H1 (cell line): ENCODE measurements at regions of chr1 and their contacts with region 1.

Region 1: GRCh38 chr1:117093870-117094621 is 27.5 kb downstream of the TRIM45 start:
- DNase-seq: no peak
- H3K4me3 ChIP-seq: no peak overlapping the region
- H3K27ac ChIP-seq: no peak overlapping the region
- H3K4me1 ChIP-seq: peaks cover 0 to 9% (median 2%) of the 10 kb centered on the region in 4 experiments; a peak in 2 of 7 replicates
- H3K27me3 ChIP-seq: no peaks in the 10 kb centered on the region
- CTCF ChIP-seq: peak in 2 of 3 experiments; percentile 10 to 40; a peak in 2 of 4 replicates
- EP300 ChIP-seq: no peak
- POLR2A ChIP-seq: no peak
- RAD21 ChIP-seq: peak; percentile 24 to 35; a peak in 2 of 4 replicates

Region 2: GRCh38 chr1:116990612-116991151 is 103.4 kb before region 1 on chr1:
- CTCF ChIA-PET with region 1: no interaction called
- POLR2A ChIA-PET with region 1: no interaction called
- DNase-seq: no peak
- H3K4me3 ChIP-seq: no peak overlapping the region
- H3K27ac ChIP-seq: no peak overlapping the region
- H3K4me1 ChIP-seq: peaks cover 0 to 4% (median 0%) of the 10 kb centered on the region in 4 experiments; a peak in 1 of 7 replicates
- H3K27me3 ChIP-seq: no peaks in the 10 kb centered on the region
- CTCF ChIP-seq: no peak
- EP300 ChIP-seq: no peak
- POLR2A ChIP-seq: no peak
- RAD21 ChIP-seq: no peak

Region 3: DNA sequence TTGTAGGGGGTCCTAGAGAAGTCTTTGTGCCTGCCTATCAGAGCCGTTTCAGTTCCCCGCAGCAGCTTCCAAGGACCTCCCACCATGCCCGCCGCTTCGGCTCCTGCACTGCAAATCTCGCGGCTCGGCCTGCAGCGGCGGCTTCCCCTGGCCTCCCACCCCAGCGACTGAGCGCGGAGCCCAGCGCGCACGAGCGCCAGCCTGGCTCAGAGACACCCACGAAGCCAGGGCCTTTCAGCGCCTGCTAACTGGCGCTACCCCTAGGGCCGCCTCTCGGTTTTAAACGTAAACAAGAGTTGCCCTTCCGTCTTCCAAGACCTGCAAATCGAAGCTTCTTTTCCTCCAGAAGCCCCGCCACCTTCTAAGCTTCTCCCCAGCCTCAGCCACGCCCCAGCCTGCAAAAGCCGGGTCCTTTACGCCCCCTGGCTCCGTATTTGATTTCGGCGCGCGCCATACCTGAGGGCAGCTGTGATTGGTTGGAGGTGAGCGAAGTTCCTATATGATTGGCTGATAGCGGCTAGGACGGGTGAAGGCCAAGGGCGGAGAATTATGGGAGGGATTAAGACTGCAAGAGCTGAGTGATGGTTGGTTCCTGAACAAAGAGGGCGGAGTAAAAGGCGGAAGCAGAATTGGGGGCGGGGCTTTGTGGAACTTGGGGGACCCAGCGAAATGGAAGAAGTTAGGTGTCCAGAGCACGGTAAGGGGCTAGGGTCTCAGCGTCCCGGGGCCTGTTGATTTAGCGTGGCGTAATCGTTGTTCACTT is 34.2 kb before region 1 on chr1 and contains the start of gene TTF2:
- CTCF ChIA-PET with region 1: interaction called, 5 read pairs
- POLR2A ChIA-PET with region 1: interaction called, 10 read pairs
- DNase-seq: peak; percentile 93 to 98
- H3K4me3 ChIP-seq: peak within 1 kb of the TSS; percentile 77 to 96 (median 90)
- H3K27ac ChIP-seq: peak within 1 kb of the TSS; percentile 92
- H3K4me1 ChIP-seq: peaks cover 0 to 3% (median 1%) of the 10 kb centered on the region in 4 experiments; a peak in 1 of 7 replicates
- H3K27me3 ChIP-seq: no peaks in the 10 kb centered on the region
- CTCF ChIP-seq: peak in 1 of 3 experiments; percentile 30; a peak in 2 of 4 replicates
- EP300 ChIP-seq: no peak
- POLR2A ChIP-seq: peak; percentile 80 to 89
- RAD21 ChIP-seq: 0 out of 4 replicates have a peak, but pooled peaks of 1 of the 2 experiments have one; percentile 14
- total RNA-seq, gene TTF2: 89.6 and 93.2 TPM in 2 replicates

Region 4: GRCh38 chr1:117067533-117068370 is 26.3 kb before region 1 on chr1:
- CTCF ChIA-PET with region 1: interaction called, 49 read pairs
- POLR2A ChIA-PET with region 1: interaction called, 3 read pairs
- DNase-seq: no peak
- H3K4me3 ChIP-seq: no peak overlapping the region
- H3K27ac ChIP-seq: no peak overlapping the region
- H3K4me1 ChIP-seq: no peaks in the 10 kb centered on the region; a peak in 1 of 7 replicates
- H3K27me3 ChIP-seq: peaks cover 0 to 1% (median 0%) of the 10 kb centered on the region in 4 experiments; a peak in 1 of 7 replicates
- CTCF ChIP-seq: peak; percentile 57 to 80 (median 67)
- EP300 ChIP-seq: no peak
- POLR2A ChIP-seq: no peak
- RAD21 ChIP-seq: peak; percentile 86 to 88

Region 5: GRCh38 chr1:117077267-117077666 is 16.8 kb before region 1 on chr1:
- CTCF ChIA-PET with region 1: interaction called, 10 read pairs
- POLR2A ChIA-PET with region 1: interaction called, 7 read pairs
- DNase-seq: no peak
- H3K4me3 ChIP-seq: no peak overlapping the region
- H3K27ac ChIP-seq: no peak overlapping the region
- H3K4me1 ChIP-seq: no peaks in the 10 kb centered on the region
- H3K27me3 ChIP-seq: no peaks in the 10 kb centered on the region
- CTCF ChIP-seq: no peak
- EP300 ChIP-seq: no peak
- POLR2A ChIP-seq: no peak
- RAD21 ChIP-seq: no peak

Region 6: GRCh38 chr1:117110774-117111173 is 16.7 kb after region 1 on chr1:
- CTCF ChIA-PET with region 1: interaction called, 43 read pairs
- POLR2A ChIA-PET with region 1: interaction called, 5 read pairs
- DNase-seq: no peak
- H3K4me3 ChIP-seq: no peak overlapping the region
- H3K27ac ChIP-seq: no peak overlapping the region
- H3K4me1 ChIP-seq: peaks cover 2 to 5% (median 3%) of the 10 kb centered on the region in 4 experiments; a peak in 4 of 7 replicates
- H3K27me3 ChIP-seq: no peaks in the 10 kb centered on the region
- CTCF ChIP-seq: no peak
- EP300 ChIP-seq: no peak
- POLR2A ChIP-seq: no peak
- RAD21 ChIP-seq: no peak